ENCODE measurements at regions of chr12 and their contacts with region 1.

Region 1: DNA sequence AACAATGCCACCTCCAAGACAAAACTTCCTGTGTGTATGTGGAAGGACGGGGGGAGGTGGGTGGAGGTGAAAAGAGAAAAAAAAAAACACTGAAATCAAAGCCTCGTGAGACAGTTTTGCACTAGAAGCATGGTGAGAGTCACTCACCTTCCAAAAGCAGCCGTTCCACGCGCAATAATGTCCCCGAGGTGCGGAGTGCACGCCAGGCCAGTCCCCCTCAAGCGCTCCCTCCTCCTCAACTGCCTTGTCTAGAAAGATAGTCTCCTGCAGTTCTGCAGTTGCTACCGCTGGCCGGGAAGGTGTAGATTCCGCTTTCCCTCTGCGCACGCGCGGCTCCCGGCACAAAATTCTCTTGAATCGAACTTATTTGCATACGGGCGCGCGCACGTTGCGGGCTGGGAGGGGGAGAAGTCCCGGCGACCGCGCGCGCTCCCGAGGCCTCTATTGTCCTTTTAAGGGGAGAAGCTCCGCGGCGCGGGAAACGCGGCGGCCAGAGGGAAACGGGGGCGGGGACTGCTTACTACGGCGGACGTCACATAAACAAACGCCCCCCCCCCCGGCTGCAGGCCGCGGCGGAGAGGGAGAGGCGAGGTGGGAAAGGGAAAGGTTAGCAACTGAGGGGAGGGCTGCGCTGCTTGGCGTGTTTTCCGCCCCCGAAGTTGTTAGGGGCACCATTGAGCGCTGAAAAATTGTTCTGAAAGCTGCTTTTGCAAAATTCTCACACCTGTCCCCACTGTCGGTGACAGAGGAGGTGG is at the start of gene SINHCAF:
- DNase-seq: peak; percentile 100
- ATAC-seq: peak; percentile 72
- H3K4me3 Mint-ChIP-seq: peak within 1 kb of the TSS; percentile 100
- H3K27ac Mint-ChIP-seq: peak within 1 kb of the TSS; percentile 95
- H3K4me1 Mint-ChIP-seq: peaks cover 24% of the 10 kb centered on the region
- H3K27me3 Mint-ChIP-seq: no peaks in the 10 kb centered on the region
- total RNA-seq, gene SINHCAF: 187 to 211 TPM

Region 2: GRCh38 chr12:29380536-29381523 is 1945.2 kb before region 1 on chr12 and contains the start of gene ERGIC2:
- CTCF ChIA-PET with region 1: no interaction called
- POLR2A ChIA-PET with region 1: no interaction called
- intact Hi-C with region 1: loop called (anchors 2 to 10 kb)
- DNase-seq: peak; percentile 93
- ATAC-seq: peak; percentile 95
- H3K4me3 Mint-ChIP-seq: peak within 1 kb of the TSS; percentile 92
- H3K27ac Mint-ChIP-seq: peak within 1 kb of the TSS; percentile 93
- H3K4me1 Mint-ChIP-seq: peaks cover 42% of the 10 kb centered on the region
- H3K27me3 Mint-ChIP-seq: no peaks in the 10 kb centered on the region
- total RNA-seq, gene ERGIC2: 104 to 151 TPM

Region 3: GRCh38 chr12:30754709-30755394 is 571.2 kb before region 1 on chr12 and contains the start of gene CAPRIN2:
- CTCF ChIA-PET with region 1: no interaction called
- POLR2A ChIA-PET with region 1: no interaction called
- intact Hi-C with region 1: loop called (anchors 2 to 10 kb)
- DNase-seq: peak; percentile 96
- ATAC-seq: peak; percentile 94
- H3K4me3 Mint-ChIP-seq: peak within 1 kb of the TSS; percentile 86
- H3K27ac Mint-ChIP-seq: peak within 1 kb of the TSS; percentile 78
- H3K4me1 Mint-ChIP-seq: peaks cover 36% of the 10 kb centered on the region
- H3K27me3 Mint-ChIP-seq: no peaks in the 10 kb centered on the region
- total RNA-seq, gene CAPRIN2: 10.0 to 19.8 TPM

Region 4: DNA sequence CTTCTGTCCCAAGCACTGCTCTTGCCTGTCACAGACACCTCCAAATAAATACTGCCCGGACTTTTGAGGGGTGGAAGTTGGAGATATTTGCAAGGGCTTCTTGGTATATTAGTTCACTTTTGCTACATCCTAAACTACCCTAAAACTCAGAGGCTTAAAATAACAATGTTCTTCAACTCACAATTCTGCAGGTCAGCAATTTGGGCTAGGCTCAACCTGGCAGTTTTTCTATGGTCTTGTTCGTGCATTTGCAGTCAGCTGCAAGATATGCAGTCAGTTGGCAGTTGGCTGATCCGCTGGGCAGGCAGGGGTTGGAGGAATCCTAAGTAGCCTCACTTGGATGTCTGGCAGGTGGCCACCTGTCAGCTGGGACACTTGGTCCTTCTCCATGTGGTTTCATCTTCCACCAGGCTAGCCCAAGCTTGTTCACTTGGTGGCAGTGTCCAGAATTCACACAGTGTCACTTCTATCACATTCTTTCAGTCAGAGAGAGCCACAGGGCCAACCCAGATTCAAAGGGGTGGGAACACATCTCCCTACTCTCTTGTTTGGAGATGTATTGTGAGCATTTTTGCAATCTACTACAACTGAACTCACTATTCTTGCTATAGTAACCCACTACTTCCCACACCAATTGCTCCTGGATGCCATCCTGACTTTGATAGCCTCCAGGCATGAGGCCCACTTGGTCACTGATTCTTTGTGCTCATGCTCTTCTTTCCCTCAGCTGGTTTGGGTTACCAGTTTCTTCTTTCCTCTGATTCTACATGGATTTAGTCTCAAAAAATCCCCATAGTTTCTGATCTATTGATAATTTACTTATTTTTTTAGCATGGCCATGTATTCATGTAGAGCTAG is 543.5 kb before region 1 on chr12:
- CTCF ChIA-PET with region 1: no interaction called
- POLR2A ChIA-PET with region 1: no interaction called
- intact Hi-C with region 1: no loop called
- DNase-seq: no peak
- ATAC-seq: no peak
- H3K4me3 Mint-ChIP-seq: no peak overlapping the region
- H3K27ac Mint-ChIP-seq: no peak overlapping the region
- H3K4me1 Mint-ChIP-seq: no peaks in the 10 kb centered on the region
- H3K27me3 Mint-ChIP-seq: peaks cover 18% of the 10 kb centered on the region

Region 5: GRCh38 chr12:31206038-31206670 is 119.9 kb before region 1 on chr12:
- CTCF ChIA-PET with region 1: no interaction called
- POLR2A ChIA-PET with region 1: no interaction called
- intact Hi-C with region 1: no loop called
- DNase-seq: no peak
- ATAC-seq: no peak
- H3K4me3 Mint-ChIP-seq: no peak overlapping the region
- H3K27ac Mint-ChIP-seq: no peak overlapping the region
- H3K4me1 Mint-ChIP-seq: peaks cover 13% of the 10 kb centered on the region
- H3K27me3 Mint-ChIP-seq: peaks cover 15% of the 10 kb centered on the region

Region 6: DNA sequence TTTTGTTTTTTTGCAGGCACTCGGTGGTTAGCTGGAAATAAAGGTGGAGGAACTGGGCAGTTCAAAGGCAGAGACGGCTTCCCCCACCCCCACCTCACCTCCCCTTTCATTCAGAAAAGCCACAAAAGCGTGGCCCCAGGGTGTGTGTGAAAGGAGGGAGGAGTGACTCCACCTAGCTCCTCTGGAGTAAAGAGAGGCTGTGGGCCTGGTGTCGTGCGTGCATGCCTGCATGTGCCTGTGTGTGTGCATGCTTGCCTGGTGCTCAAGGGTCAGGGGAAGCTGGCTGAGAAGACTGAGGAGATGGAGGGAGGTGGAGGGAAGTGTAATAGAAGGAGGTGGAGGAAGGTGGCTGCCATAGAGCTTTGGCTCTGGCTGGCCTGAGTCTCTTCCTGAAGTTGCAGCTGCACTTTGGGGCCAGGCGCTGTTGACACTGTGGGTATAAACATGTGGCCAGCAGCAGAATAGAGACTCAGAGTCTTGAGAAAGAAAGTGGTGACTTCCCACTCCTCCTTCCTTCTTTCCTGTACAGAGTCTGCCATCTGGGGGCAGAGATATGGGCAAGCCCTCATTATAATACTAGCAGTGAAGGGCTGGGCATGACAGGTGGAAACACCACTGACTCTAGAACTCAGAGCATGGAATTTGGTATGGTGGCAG is 36.8 kb after region 1 on chr12:
- CTCF ChIA-PET with region 1: no interaction called
- POLR2A ChIA-PET with region 1: no interaction called
- intact Hi-C with region 1: loop called in 1 of 2 experiments (anchors 1 kb)
- DNase-seq: peak; percentile 64
- ATAC-seq: peak; percentile 85
- H3K4me3 Mint-ChIP-seq: peak overlapping the region; percentile 45
- H3K27ac Mint-ChIP-seq: peak overlapping the region; percentile 70
- H3K4me1 Mint-ChIP-seq: peaks cover 14% of the 10 kb centered on the region
- H3K27me3 Mint-ChIP-seq: no peaks in the 10 kb centered on the region

Region 7: GRCh38 chr12:31659087-31659933 is 333.3 kb after region 1 on chr12 and contains the start of gene ETFBKMT:
- CTCF ChIA-PET with region 1: no interaction called
- POLR2A ChIA-PET with region 1: no interaction called
- intact Hi-C with region 1: loop called in 1 of 2 experiments (anchors 1 kb)
- DNase-seq: peak; percentile 96
- ATAC-seq: peak; percentile 99
- H3K4me3 Mint-ChIP-seq: peak within 1 kb of the TSS; percentile 87
- H3K27ac Mint-ChIP-seq: peak within 1 kb of the TSS; percentile 100
- H3K4me1 Mint-ChIP-seq: peaks cover 13% of the 10 kb centered on the region
- H3K27me3 Mint-ChIP-seq: no peaks in the 10 kb centered on the region
- total RNA-seq, gene ETFBKMT: 0.35 to 1.4 TPM

Region 8: GRCh38 chr12:31959161-31959700 is 633.2 kb after region 1 on chr12 and contains the start of gene RESF1:
- CTCF ChIA-PET with region 1: no interaction called
- POLR2A ChIA-PET with region 1: no interaction called
- intact Hi-C with region 1: loop called (anchors 1 to 10 kb)
- DNase-seq: peak; percentile 90
- ATAC-seq: peak; percentile 83
- H3K4me3 Mint-ChIP-seq: peak within 1 kb of the TSS; percentile 89
- H3K27ac Mint-ChIP-seq: peak within 1 kb of the TSS; percentile 97
- H3K4me1 Mint-ChIP-seq: peaks cover 72% of the 10 kb centered on the region
- H3K27me3 Mint-ChIP-seq: no peaks in the 10 kb centered on the region
- total RNA-seq, gene RESF1: 52.0 to 78.8 TPM

Region 9: DNA sequence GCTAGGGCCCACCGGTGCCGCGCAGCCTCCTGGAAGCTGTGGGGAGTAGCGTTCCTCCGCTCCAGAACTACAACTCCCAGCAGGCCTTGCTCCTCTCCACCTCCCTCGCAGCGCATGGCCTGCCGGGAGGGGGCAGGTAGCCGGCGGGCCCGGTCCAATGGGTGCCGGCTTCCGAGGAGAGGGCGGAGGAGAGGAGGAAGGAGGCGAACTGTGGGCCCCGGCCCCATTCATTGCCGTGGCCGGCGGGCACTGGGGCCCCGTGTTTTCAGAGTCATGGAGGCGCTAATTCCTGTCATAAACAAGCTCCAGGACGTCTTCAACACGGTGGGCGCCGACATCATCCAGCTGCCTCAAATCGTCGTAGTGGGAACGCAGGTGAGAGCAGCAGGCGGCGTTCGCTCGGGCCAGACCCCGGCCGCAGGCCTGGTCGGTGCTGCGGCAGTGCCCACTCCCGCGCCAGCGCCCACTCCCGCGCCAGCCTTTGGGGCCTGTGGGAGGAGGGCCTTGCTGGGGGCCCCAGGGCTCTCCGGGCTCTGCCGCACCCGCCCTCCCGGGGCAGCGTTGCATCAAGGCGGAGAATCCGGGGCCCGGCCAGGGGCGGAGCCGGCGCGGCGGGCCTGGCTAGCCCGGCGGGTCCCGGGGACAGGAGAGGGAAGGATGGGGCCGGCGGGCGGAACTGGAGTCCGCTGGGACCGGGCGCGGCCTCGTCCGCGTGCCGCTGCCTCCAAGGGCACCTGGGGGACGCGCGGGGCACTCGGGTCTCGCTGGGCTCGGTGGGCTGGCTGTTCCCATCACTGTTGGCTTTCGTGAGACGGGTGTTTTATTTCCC is 1353.3 kb after region 1 on chr12 and contains the start of gene DNM1L:
- CTCF ChIA-PET with region 1: no interaction called
- POLR2A ChIA-PET with region 1: no interaction called
- intact Hi-C with region 1: loop called in 1 of 2 experiments (anchors 5 kb)
- DNase-seq: peak; percentile 96
- ATAC-seq: peak; percentile 99
- H3K4me3 Mint-ChIP-seq: peak within 1 kb of the TSS; percentile 84
- H3K27ac Mint-ChIP-seq: peak within 1 kb of the TSS; percentile 89
- H3K4me1 Mint-ChIP-seq: peaks cover 21% of the 10 kb centered on the region
- H3K27me3 Mint-ChIP-seq: no peaks in the 10 kb centered on the region
- total RNA-seq, gene DNM1L: 67.1 to 68.5 TPM